ENCODE measurements at regions of chr10 and their contacts with region 1.

Region 1: GRCh38 chr10:116875897-116876296 is 26.6 kb downstream of the ENO4 start:
- DNase-seq: no peak
- CTCF ChIP-seq: no peak

Region 2: GRCh38 chr10:116886772-116887171 is 10.9 kb after region 1 on chr10:
- CTCF ChIA-PET with region 1: interaction called, 11 read pairs
- POLR2A ChIA-PET with region 1: no interaction called
- DNase-seq: no peak
- CTCF ChIP-seq: no peak